Tibial artery (tissue), 4 donors: ENCODE measurements at regions of chr11 and their contacts with region 1.

Region 1: GRCh38 chr11:74388678-74389327 is 9.4 kb downstream of the PGM2L1 start:
- DNase-seq: peak in 1 of 2 donors; percentile 75
- H3K4me3 ChIP-seq: no peak overlapping the region
- H3K27ac ChIP-seq: no peak overlapping the region
- H3K4me1 ChIP-seq: no peaks in the 10 kb centered on the region
- H3K27me3 ChIP-seq: no peaks in the 10 kb centered on the region
- CTCF ChIP-seq: peak; percentile 69 to 70

Region 2: DNA sequence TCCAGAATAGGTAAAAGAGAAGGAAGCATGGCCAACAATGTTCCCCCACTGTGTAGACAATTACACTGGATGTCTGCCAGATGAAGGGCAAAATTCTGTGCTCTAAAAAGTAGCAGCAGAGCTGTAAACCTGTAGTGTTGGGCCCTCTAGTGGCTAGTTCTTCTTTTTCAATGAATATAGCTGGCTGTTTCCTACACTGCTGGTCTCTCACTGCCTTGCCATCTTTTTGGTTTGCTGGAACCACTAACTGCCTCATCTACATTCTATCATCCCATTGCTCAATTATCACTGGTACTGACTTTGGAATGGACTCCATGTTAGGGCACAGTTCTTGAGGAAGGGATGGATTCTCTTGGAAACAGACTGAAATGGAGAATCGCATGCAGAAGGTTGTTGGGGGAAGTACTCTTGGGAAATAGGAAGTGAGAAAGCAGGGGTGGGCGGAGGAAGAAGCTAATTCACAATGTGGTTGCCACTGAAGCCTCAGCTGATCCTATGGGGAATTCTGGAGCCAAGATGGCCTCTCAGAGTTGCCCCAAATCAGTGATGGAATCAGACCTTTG is 60.6 kb after region 1 on chr11:
- intact Hi-C with region 1: loop called (anchors 2 kb)
- DNase-seq: peak in 1 of 2 donors; percentile 29
- H3K4me3 ChIP-seq: no peak overlapping the region
- H3K27ac ChIP-seq: no peak overlapping the region
- H3K4me1 ChIP-seq: peaks cover 0 to 2% (median 0%) of the 10 kb centered on the region in 4 donors
- H3K27me3 ChIP-seq: peaks cover 0 to 7% of the 10 kb centered on the region in 2 donors
- CTCF ChIP-seq: peak; percentile 60 to 86